ENCODE measurements at regions of chr17 and their contacts with region 1.

Region 1: GRCh38 chr17:56624315-56624714 is 30.8 kb downstream of the NOG start:
- DNase-seq: no peak
- H3K4me3 ChIP-seq: no peak overlapping the region
- H3K27ac ChIP-seq: no peak overlapping the region
- H3K4me1 ChIP-seq: peaks cover 0 to 4% (median 0%) of the 10 kb centered on the region in 4 experiments; a peak in 3 of 7 replicates
- H3K27me3 ChIP-seq: no peaks in the 10 kb centered on the region
- CTCF ChIP-seq: no peak
- EP300 ChIP-seq: no peak
- POLR2A ChIP-seq: no peak
- RAD21 ChIP-seq: no peak

Region 2: GRCh38 chr17:56638591-56639051 is 14.3 kb after region 1 on chr17:
- CTCF ChIA-PET with region 1: interaction called, 33 read pairs
- POLR2A ChIA-PET with region 1: no interaction called
- DNase-seq: no peak
- H3K4me3 ChIP-seq: no peak overlapping the region
- H3K27ac ChIP-seq: no peak overlapping the region
- H3K4me1 ChIP-seq: peaks cover 0 to 2% (median 0%) of the 10 kb centered on the region in 4 experiments; a peak in 1 of 7 replicates
- H3K27me3 ChIP-seq: no peaks in the 10 kb centered on the region; a peak in 1 of 7 replicates
- CTCF ChIP-seq: no peak
- EP300 ChIP-seq: no peak
- POLR2A ChIP-seq: no peak
- RAD21 ChIP-seq: no peak

Region 3: DNA sequence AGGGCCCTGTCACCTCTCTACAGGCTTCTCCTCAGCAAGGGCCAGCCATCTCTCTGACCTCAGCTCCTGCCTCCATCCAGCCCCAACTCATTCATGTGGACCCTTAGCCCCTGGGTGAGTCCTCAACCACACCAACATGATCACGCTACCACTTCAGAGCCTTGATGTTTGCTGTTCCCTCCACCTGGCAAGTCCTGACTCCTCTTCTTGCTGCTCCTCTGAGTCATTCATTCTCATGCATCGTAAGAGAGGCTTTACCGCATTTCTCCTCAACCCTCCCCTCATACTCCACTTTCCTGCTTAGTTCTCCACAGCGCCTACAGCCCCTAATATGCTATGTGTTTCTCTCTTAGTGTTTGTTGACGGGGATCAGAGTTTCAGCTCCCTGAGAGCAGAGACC is 109.5 kb after region 1 on chr17:
- CTCF ChIA-PET with region 1: no interaction called
- POLR2A ChIA-PET with region 1: no interaction called
- DNase-seq: no peak
- H3K4me3 ChIP-seq: no peak overlapping the region
- H3K27ac ChIP-seq: no peak overlapping the region
- H3K4me1 ChIP-seq: peaks cover 0 to 2% (median 0%) of the 10 kb centered on the region in 4 experiments; a peak in 1 of 7 replicates
- H3K27me3 ChIP-seq: no peaks in the 10 kb centered on the region
- CTCF ChIP-seq: no peak
- EP300 ChIP-seq: no peak
- POLR2A ChIP-seq: no peak
- RAD21 ChIP-seq: no peak

Measured in H1 (cell line).